ENCODE measurements at regions of chr15 and their contacts with region 1.

Region 1: DNA sequence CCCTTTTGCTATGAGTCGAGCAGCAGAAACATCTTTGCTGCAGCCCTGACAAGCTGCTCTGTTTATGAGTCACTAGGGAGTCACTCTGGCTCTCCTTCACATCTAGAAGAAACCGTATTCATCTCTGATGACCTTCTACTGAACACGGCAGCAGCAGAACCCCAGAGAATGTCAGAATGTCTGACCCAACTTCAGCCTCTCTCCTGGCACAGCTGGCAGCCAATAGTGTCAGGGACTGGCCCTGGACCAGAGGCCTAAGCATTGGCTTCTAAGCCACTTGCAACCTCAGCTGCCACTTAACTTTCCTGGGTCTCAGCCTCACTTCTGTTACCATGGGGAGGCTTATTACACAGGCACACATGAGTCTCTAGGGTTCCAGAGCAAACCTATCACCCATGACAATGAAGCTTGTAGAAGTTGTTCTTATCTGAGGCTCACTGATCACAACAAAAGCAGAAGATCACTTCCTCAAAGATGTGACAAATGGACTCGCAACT is 184.1 kb upstream of the TLE3 start:
- DNase-seq: no peak
- ATAC-seq: peak in 3 of 4 donors; percentile 34 to 72 (median 64)
- H3K4me3 ChIP-seq: no peak overlapping the region
- H3K27ac ChIP-seq: no peak overlapping the region
- H3K4me1 ChIP-seq: peaks cover 0 to 14% (median 3%) of the 10 kb centered on the region in 12 donors
- H3K27me3 ChIP-seq: no peaks in the 10 kb centered on the region
- CTCF ChIP-seq: no peak
- POLR2A ChIP-seq: no peak

Region 2: DNA sequence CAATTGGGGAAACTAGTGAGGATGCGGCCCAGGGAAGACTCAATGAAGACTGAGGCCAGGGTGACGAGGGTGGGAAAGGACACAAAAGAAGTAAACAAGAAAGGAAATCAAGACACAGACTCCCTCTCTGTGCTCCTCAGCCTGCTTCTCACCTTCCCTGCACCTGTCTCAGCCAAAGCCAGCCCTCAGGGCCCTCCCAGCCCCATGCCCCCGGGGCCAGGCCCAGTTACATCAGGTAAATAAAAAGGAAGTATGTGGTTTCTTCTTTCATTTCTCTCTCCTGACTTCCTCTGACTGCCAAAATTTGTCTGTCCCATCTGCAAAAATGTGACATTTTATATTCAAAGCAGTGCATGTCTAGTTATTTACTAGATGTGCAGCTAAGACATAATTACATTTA is 153.5 kb after region 1 on chr15:
- intact Hi-C with region 1: loop called in 1 of 10 experiments (anchors 10 kb)
- DNase-seq: no peak
- ATAC-seq: no peak
- H3K4me3 ChIP-seq: no peak overlapping the region
- H3K27ac ChIP-seq: no peak overlapping the region
- H3K4me1 ChIP-seq: peaks cover 0 to 46% (median 26%) of the 10 kb centered on the region in 12 donors
- H3K27me3 ChIP-seq: no peaks in the 10 kb centered on the region
- CTCF ChIP-seq: no peak
- POLR2A ChIP-seq: no peak